PC-3 (cell line): ENCODE measurements at regions of chr4 and their contacts with region 1.

Region 1: DNA sequence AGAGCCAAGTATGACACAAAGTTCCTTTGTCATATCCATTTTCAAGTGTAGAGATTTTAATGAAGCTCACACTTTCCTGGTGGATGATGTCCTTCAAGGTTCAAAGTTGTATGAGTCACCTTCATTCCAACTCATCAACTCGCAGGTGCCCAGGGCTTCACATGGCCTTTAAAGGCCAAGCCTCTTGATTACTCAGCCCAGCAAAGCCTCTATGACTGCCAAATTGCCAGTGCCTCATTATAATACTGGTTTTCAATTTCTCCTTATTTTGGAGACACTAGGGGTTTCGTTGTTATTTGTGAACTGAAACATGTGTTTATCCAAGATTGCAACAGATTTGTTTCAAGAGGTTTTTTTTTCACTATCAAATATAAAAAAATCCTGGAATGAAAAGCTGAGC is 45.9 kb upstream of the PPP3CA start:
- DNase-seq: peak; percentile 68
- ATAC-seq: peak; percentile 70
- H3K4me3 ChIP-seq: no peak overlapping the region
- H3K27ac ChIP-seq: no peak overlapping the region
- H3K4me1 ChIP-seq: peaks cover 7% of the 10 kb centered on the region; the same call in 1 of the 2 replicates
- H3K27me3 ChIP-seq: no peaks in the 10 kb centered on the region
- CTCF ChIP-seq: no peak

Region 2: DNA sequence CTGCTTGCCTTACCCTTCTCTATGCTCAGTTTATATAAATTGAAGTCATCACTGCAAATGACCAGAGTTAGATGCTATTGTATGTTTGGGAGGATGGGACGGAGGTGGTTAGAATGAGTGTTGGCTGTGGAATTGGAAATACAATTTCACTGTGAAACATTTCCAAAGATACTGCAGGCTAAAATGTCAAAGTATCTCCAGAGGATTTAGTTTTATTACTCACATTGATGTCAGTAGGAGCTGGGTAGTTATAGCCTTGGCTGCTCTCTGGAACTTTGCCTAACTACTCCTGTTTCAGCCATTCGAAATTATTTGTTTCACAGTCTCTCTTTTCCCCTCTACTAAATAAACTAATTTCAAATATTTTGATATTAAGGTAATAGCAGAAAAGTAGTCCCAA is 46.7 kb after region 1 on chr4:
- CTCF ChIA-PET with region 1: no interaction called
- POLR2A ChIA-PET with region 1: interaction called, 13 read pairs
- intact Hi-C with region 1: no loop called
- DNase-seq: no peak
- ATAC-seq: no peak
- H3K4me3 ChIP-seq: no peak overlapping the region
- H3K27ac ChIP-seq: no peak overlapping the region
- H3K4me1 ChIP-seq: no peaks in the 10 kb centered on the region
- H3K27me3 ChIP-seq: no peaks in the 10 kb centered on the region
- CTCF ChIP-seq: no peak